Caco-2 (cell line): ENCODE measurements at regions of chr1 and their contacts with region 1.

Region 1: GRCh38 chr1:150925816-150926741 is at the start of gene SETDB1:
- DNase-seq: peak; percentile 97 to 98
- H3K4me3 ChIP-seq: peak within 1 kb of the TSS; percentile 77
- H3K4me3 Mint-ChIP-seq: peak within 1 kb of the TSS; percentile 92
- H3K27ac Mint-ChIP-seq: peak within 1 kb of the TSS; percentile 93
- H3K4me1 ChIP-seq: no peaks in the 10 kb centered on the region; the same call in none of the 2 replicates
- H3K4me1 Mint-ChIP-seq: peaks cover 7% of the 10 kb centered on the region
- H3K27me3 ChIP-seq: no peaks in the 10 kb centered on the region
- H3K27me3 Mint-ChIP-seq: no peaks in the 10 kb centered on the region
- CTCF ChIP-seq: no peak
- total RNA-seq, gene SETDB1: 45.0 and 46.7 TPM in 2 replicates

Region 2: DNA sequence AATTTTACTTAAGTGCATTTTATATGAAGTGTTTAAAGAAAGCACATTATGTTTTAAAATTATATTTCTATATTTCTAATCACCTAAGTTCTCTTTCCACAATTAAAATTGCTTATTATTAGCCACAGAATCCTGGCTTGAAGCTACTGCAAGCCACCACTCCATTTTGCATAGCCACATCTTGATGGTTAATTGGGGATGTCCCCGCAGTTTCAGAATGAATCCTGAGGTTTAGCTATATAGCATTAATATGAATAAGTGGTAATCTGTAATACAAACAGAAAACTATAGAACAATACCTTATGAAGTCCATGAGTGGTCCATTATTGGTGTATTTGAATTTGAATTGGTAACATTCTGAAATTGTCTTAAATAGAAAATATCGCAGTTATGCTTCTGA is 217.5 kb before region 1 on chr1:
- CTCF ChIA-PET with region 1: interaction called, 10 read pairs
- POLR2A ChIA-PET with region 1: no interaction called
- intact Hi-C with region 1: no loop called
- DNase-seq: no peak
- H3K4me3 ChIP-seq: no peak overlapping the region
- H3K4me3 Mint-ChIP-seq: no peak overlapping the region
- H3K27ac Mint-ChIP-seq: no peak overlapping the region
- H3K4me1 ChIP-seq: no peaks in the 10 kb centered on the region
- H3K4me1 Mint-ChIP-seq: no peaks in the 10 kb centered on the region
- H3K27me3 ChIP-seq: no peaks in the 10 kb centered on the region
- H3K27me3 Mint-ChIP-seq: no peaks in the 10 kb centered on the region
- CTCF ChIP-seq: no peak

Region 3: GRCh38 chr1:150846473-150847146 is 79.5 kb before region 1 on chr1:
- CTCF ChIA-PET with region 1: no interaction called
- POLR2A ChIA-PET with region 1: no interaction called
- intact Hi-C with region 1: loop called (anchors 5 kb)
- DNase-seq: no peak
- H3K4me3 ChIP-seq: no peak overlapping the region
- H3K4me3 Mint-ChIP-seq: no peak overlapping the region
- H3K27ac Mint-ChIP-seq: no peak overlapping the region
- H3K4me1 ChIP-seq: no peaks in the 10 kb centered on the region
- H3K4me1 Mint-ChIP-seq: no peaks in the 10 kb centered on the region
- H3K27me3 ChIP-seq: no peaks in the 10 kb centered on the region
- H3K27me3 Mint-ChIP-seq: no peaks in the 10 kb centered on the region
- CTCF ChIP-seq: no peak

Region 4: DNA sequence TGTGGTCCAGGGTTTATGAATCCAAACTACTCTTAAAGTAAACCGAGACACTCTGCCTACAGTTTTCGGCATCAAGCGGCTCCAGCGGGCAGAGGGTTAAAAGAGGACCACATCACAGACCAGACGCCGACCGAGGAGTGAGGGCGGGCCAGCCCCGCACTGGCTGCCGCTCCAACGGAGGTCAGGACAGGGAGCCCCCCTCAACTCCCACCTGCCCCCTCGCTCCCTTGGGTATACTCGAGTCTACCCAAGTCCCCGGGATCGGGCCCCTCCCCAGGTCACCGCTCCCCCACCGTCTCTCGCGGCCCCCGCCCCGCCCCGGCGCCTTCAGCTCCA is 50.0 kb before region 1 on chr1:
- CTCF ChIA-PET with region 1: no interaction called
- POLR2A ChIA-PET with region 1: interaction called, 10 read pairs
- intact Hi-C with region 1: loop called (anchors 1 kb)
- DNase-seq: no peak
- H3K4me3 ChIP-seq: peak overlapping the region; percentile 83
- H3K4me3 Mint-ChIP-seq: peak overlapping the region; percentile 81
- H3K27ac Mint-ChIP-seq: peak overlapping the region; percentile 86
- H3K4me1 ChIP-seq: peaks cover 12% of the 10 kb centered on the region; the same call in 1 of the 2 replicates
- H3K4me1 Mint-ChIP-seq: peaks cover 7% of the 10 kb centered on the region
- H3K27me3 ChIP-seq: no peaks in the 10 kb centered on the region
- H3K27me3 Mint-ChIP-seq: no peaks in the 10 kb centered on the region
- CTCF ChIP-seq: no peak

Region 5: DNA sequence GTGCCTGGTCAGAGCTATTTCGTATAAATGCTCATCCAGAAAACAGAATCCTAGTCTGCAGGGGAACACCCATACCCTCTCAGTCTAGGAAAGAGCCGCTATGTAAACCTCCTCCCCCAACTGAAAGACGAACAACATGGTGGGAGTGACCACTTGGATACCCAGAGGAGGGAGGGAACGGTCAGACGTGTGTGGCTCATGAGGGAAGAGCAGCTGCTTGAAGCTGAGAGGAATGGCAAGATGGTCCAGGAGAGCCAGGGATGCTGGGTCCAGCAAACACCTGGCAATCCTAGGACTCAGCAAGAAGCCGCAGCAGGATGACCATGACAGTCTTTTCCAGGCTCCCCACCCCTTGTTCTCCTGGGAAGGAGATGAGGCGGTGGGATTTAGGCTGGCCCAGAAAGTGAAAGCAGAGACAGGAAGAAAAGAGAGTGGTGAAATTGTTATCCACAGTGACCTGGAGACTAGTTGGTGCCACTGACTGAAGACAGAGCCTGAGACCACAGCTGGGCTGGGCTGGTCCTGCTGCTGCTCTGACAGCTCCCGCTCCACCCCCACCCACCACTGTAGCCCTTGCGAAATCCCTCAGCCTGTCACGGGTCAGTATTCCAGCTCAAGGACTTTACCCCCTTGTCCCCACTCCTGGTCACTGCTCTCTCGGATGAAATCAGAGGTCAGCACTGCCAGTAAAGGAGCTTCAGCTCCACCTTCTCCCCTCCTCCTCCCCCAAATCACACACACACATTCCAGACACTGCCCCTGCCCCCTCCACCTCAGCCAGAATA is 44.9 kb after region 1 on chr1:
- CTCF ChIA-PET with region 1: interaction called, 4 read pairs
- POLR2A ChIA-PET with region 1: no interaction called
- intact Hi-C with region 1: loop called (anchors 1 kb)
- DNase-seq: peak; percentile 95 to 97
- H3K4me3 ChIP-seq: peak overlapping the region; percentile 96
- H3K4me3 Mint-ChIP-seq: peak overlapping the region; percentile 91
- H3K27ac Mint-ChIP-seq: peak overlapping the region; percentile 91
- H3K4me1 ChIP-seq: peaks cover 47% of the 10 kb centered on the region
- H3K4me1 Mint-ChIP-seq: peaks cover 48% of the 10 kb centered on the region
- H3K27me3 ChIP-seq: no peaks in the 10 kb centered on the region
- H3K27me3 Mint-ChIP-seq: no peaks in the 10 kb centered on the region
- CTCF ChIP-seq: no peak

Region 6: GRCh38 chr1:151008190-151008860 is 82.2 kb after region 1 on chr1 and contains the start of gene PRUNE1:
- CTCF ChIA-PET with region 1: no interaction called
- POLR2A ChIA-PET with region 1: no interaction called
- intact Hi-C with region 1: loop called (anchors 5 kb)
- DNase-seq: peak; percentile 96 to 97
- H3K4me3 ChIP-seq: peak within 1 kb of the TSS; percentile 71
- H3K4me3 Mint-ChIP-seq: peak within 1 kb of the TSS; percentile 92
- H3K27ac Mint-ChIP-seq: peak within 1 kb of the TSS; percentile 99
- H3K4me1 ChIP-seq: peaks cover 46% of the 10 kb centered on the region
- H3K4me1 Mint-ChIP-seq: peaks cover 21% of the 10 kb centered on the region
- H3K27me3 ChIP-seq: no peaks in the 10 kb centered on the region
- H3K27me3 Mint-ChIP-seq: no peaks in the 10 kb centered on the region
- CTCF ChIP-seq: no peak
- total RNA-seq, gene PRUNE1: 24.2 and 24.3 TPM in 2 replicates